Activated CD8-positive, alpha-beta T cell treated with anti-CD3 and anti-CD28 coated beads for 36 hours (primary cell): ENCODE measurements at regions of chr13 and their contacts with region 1.

Region 1: GRCh38 chr13:21287331-21287907 is 111.0 kb downstream of the MRPL57 start:
- DNase-seq: no peak
- ATAC-seq: no peak
- H3K4me3 Mint-ChIP-seq: no peak overlapping the region
- H3K27ac Mint-ChIP-seq: no peak overlapping the region
- H3K4me1 Mint-ChIP-seq: no peaks in the 10 kb centered on the region
- H3K27me3 Mint-ChIP-seq: no peaks in the 10 kb centered on the region
- CTCF ChIP-seq: no peak

Region 2: DNA sequence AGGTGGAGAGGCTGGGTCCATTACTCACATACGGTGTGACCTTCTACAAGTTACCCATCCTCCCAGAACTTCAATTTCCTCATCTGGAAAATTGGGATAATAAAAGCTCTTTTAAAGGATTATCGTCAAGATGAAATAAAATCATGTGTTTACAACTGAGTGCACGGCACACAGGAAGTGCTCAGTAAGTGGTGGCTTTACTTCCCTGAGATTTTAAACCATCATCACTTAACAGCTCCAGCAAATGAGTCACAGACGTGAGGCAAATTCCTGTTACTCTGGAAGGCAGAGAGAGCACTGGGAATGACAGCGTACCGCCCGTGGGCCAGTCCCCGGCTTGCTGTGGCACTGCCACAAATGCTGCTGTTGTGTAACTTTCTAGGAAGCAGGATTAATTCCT is 46.8 kb before region 1 on chr13:
- CTCF ChIA-PET with region 1: no interaction called
- POLR2A ChIA-PET with region 1: no interaction called
- intact Hi-C with region 1: loop called (anchors 2 kb)
- DNase-seq: no peak
- ATAC-seq: no peak
- H3K4me3 Mint-ChIP-seq: no peak overlapping the region
- H3K27ac Mint-ChIP-seq: no peak overlapping the region
- H3K4me1 Mint-ChIP-seq: peaks cover 7% of the 10 kb centered on the region
- H3K27me3 Mint-ChIP-seq: no peaks in the 10 kb centered on the region
- CTCF ChIP-seq: no peak